Activated T-helper 1 cell treated with anti-CD3 and anti-CD28 coated beads, Interleukin-12 subunit alpha, Interleukin-12 subunit beta, Interleukin-2, Interleukin-4 antibody, amounts not matched to agents 30 ng/mL and 10 ng/mL and 1 ng/mL, durations not matched to agents 14 hours and 24 hours and 36 hours (primary cell): ENCODE measurements at regions of chr9 and their contacts with region 1.

Region 1: DNA sequence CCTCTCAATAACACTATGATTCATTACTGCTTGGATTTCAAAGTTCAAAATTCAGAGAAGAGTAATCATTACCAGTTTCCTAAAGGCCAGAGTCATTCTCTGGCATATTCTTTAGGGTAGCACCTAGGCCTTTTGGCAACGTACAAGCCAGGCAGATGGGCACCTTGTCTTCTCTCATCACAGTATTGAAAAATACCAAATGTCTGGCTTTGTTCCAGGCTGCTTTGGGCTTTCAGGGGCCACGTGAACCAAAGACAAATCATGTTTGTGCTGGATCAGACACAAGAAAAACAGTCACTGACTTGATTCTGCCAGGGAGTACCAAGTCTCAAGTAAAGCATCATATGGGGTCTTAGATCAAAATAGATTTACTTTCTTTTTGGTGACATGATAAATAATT is 15.5 kb downstream of the MEGF9 start:
- DNase-seq: no peak
- H3K4me3 Mint-ChIP-seq: no peak overlapping the region
- H3K27ac Mint-ChIP-seq: no peak overlapping the region
- H3K4me1 Mint-ChIP-seq: peaks cover 19% of the 10 kb centered on the region
- H3K27me3 Mint-ChIP-seq: no peaks in the 10 kb centered on the region

Region 2: GRCh38 chr9:120619751-120620655 is 78.8 kb before region 1 on chr9:
- intact Hi-C with region 1: loop called (anchors 5 kb)
- DNase-seq: peak; percentile 29
- H3K4me3 Mint-ChIP-seq: no peak overlapping the region
- H3K27ac Mint-ChIP-seq: no peak overlapping the region
- H3K4me1 Mint-ChIP-seq: peaks cover under 1% of the 10 kb centered on the region
- H3K27me3 Mint-ChIP-seq: no peaks in the 10 kb centered on the region